IMR-90 (cell line): ENCODE measurements at regions of chr1 and their contacts with region 1.

Region 1: GRCh38 chr1:180482425-180483275 is 19.7 kb downstream of the ACBD6 start:
- DNase-seq: peak; percentile 67
- ATAC-seq: peak; percentile 71
- H3K4me3 ChIP-seq: no peak overlapping the region
- H3K27ac ChIP-seq: no peak overlapping the region
- H3K4me1 ChIP-seq: no peaks in the 10 kb centered on the region
- H3K27me3 ChIP-seq: no peaks in the 10 kb centered on the region
- CTCF ChIP-seq: peak; percentile 66
- POLR2A ChIP-seq: no peak
- RAD21 ChIP-seq: peak; percentile 34; the same call in 1 of the 2 replicates

Region 2: GRCh38 chr1:180203890-180204630 is 278.6 kb before region 1 on chr1:
- CTCF ChIA-PET with region 1: no interaction called
- POLR2A ChIA-PET with region 1: no interaction called
- dilution Hi-C with region 1: no loop called
- in situ Hi-C with region 1: no loop called
- intact Hi-C with region 1: loop called (anchors 5 kb)
- DNase-seq: no peak
- ATAC-seq: peak; percentile 8
- H3K4me3 ChIP-seq: no peak overlapping the region
- H3K27ac ChIP-seq: no peak overlapping the region
- H3K4me1 ChIP-seq: no peaks in the 10 kb centered on the region; the same call in 1 of the 2 replicates
- H3K27me3 ChIP-seq: no peaks in the 10 kb centered on the region
- CTCF ChIP-seq: no peak
- POLR2A ChIP-seq: no peak
- RAD21 ChIP-seq: no peak

Region 3: GRCh38 chr1:180252638-180253536 is 229.8 kb before region 1 on chr1:
- CTCF ChIA-PET with region 1: interaction called, 9 read pairs
- POLR2A ChIA-PET with region 1: no interaction called
- dilution Hi-C with region 1: no loop called
- in situ Hi-C with region 1: loop called (anchors 5 kb)
- intact Hi-C with region 1: loop called (anchors 1 kb)
- DNase-seq: peak; percentile 65
- ATAC-seq: peak; percentile 74
- H3K4me3 ChIP-seq: no peak overlapping the region
- H3K27ac ChIP-seq: no peak overlapping the region
- H3K4me1 ChIP-seq: peaks cover 4% of the 10 kb centered on the region; the same call in 1 of the 2 replicates
- H3K27me3 ChIP-seq: peaks cover 13% of the 10 kb centered on the region
- CTCF ChIP-seq: peak; percentile 93
- POLR2A ChIP-seq: no peak
- RAD21 ChIP-seq: peak; percentile 94

Region 4: GRCh38 chr1:180428782-180429695 is 53.6 kb before region 1 on chr1:
- CTCF ChIA-PET with region 1: no interaction called
- POLR2A ChIA-PET with region 1: no interaction called
- dilution Hi-C with region 1: no loop called
- in situ Hi-C with region 1: no loop called
- intact Hi-C with region 1: no loop called
- DNase-seq: no peak
- ATAC-seq: no peak
- H3K4me3 ChIP-seq: no peak overlapping the region
- H3K27ac ChIP-seq: no peak overlapping the region
- H3K4me1 ChIP-seq: peaks cover 2% of the 10 kb centered on the region; the same call in 1 of the 2 replicates
- H3K27me3 ChIP-seq: no peaks in the 10 kb centered on the region
- CTCF ChIP-seq: no peak
- POLR2A ChIP-seq: no peak
- RAD21 ChIP-seq: no peak